BJ (cell line): ENCODE measurements at regions of chr4 and their contacts with region 1.

Region 1: GRCh38 chr4:28639747-28640146 is 1779.1 kb downstream of the STIM2 start:
- DNase-seq: no peak
- H3K4me3 ChIP-seq: no peak overlapping the region
- H3K27me3 ChIP-seq: no peaks in the 10 kb centered on the region
- CTCF ChIP-seq: no peak

Region 2: GRCh38 chr4:26826721-26827120 is 1813.0 kb before region 1 on chr4:
- CTCF ChIA-PET with region 1: no interaction called
- POLR2A ChIA-PET with region 1: interaction called, 12 read pairs
- DNase-seq: no peak
- H3K4me3 ChIP-seq: no peak overlapping the region
- H3K27me3 ChIP-seq: peaks cover 1% of the 10 kb centered on the region; the same call in 1 of the 2 replicates
- CTCF ChIP-seq: no peak